ENCODE measurements at regions of chr4 and their contacts with region 1.

Region 1: DNA sequence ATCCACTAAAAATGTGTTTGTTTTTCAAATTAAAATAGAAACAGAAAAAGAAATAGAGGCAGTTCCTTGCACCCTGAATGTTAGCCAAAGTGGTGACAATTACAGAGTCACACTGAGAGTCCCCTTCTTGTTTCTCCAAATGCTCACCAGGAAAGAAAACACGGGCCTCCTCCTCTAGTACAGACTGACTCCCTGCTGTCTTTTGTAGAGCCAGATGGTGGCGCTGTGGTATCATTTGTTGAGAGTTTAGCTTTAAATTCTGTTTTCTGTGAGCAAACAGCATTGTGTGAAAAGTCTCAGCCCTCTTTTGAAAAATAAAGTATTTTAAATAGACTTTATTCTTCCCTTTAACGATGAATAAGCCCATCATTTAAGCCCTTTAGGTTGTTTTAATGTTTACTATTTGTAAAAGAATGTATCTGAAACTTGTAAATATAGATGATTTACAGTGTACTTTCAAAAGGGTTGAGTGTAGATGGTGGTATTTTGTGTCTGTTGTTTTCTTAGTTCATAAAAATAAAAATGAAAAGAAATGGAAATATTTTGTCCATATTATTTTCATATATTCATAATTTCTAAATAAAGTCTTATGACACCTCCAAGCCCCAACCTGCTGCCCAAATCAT is 36.9 kb upstream of the ATOH1 start:
- DNase-seq: no peak
- ATAC-seq: peak; percentile 74

Region 2: GRCh38 chr4:94127707-94128328 is 336.1 kb after region 1 on chr4:
- intact Hi-C with region 1: loop called (anchors 5 kb)
- DNase-seq: no peak
- ATAC-seq: no peak

Region 3: DNA sequence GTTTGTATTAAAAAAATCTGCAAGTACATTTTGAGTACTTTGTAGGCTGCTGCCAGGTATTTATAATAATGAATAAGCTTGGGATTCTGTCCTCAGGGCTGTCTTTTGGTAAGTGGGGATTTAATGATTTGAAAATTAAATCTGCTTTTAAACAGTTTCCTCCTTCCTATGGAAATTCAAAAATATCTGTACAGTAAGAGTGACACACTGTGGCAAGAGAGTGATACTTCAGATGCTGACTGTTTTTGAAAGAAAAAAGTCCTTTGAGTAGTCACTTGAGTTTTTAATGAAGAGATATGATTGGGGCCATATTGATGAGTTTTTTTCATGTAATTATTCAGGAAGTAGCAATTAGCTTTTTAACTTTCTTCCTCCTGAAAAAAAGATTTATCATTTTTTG is 465.1 kb after region 1 on chr4:
- intact Hi-C with region 1: loop called (anchors 10 kb)
- DNase-seq: no peak
- ATAC-seq: peak; percentile 52